Right cardiac atrium (tissue), 5 donors: ENCODE measurements at regions of chr20 and their contacts with region 1.

Region 1: GRCh38 chr20:20772602-20773001 is 60.2 kb upstream of the RALGAPA2 start:
- DNase-seq: no peak
- ATAC-seq: no peak
- H3K4me3 ChIP-seq: no peak overlapping the region
- H3K27ac ChIP-seq: no peak overlapping the region
- H3K4me1 ChIP-seq: no peaks in the 10 kb centered on the region
- H3K27me3 ChIP-seq: no peaks in the 10 kb centered on the region

Region 2: DNA sequence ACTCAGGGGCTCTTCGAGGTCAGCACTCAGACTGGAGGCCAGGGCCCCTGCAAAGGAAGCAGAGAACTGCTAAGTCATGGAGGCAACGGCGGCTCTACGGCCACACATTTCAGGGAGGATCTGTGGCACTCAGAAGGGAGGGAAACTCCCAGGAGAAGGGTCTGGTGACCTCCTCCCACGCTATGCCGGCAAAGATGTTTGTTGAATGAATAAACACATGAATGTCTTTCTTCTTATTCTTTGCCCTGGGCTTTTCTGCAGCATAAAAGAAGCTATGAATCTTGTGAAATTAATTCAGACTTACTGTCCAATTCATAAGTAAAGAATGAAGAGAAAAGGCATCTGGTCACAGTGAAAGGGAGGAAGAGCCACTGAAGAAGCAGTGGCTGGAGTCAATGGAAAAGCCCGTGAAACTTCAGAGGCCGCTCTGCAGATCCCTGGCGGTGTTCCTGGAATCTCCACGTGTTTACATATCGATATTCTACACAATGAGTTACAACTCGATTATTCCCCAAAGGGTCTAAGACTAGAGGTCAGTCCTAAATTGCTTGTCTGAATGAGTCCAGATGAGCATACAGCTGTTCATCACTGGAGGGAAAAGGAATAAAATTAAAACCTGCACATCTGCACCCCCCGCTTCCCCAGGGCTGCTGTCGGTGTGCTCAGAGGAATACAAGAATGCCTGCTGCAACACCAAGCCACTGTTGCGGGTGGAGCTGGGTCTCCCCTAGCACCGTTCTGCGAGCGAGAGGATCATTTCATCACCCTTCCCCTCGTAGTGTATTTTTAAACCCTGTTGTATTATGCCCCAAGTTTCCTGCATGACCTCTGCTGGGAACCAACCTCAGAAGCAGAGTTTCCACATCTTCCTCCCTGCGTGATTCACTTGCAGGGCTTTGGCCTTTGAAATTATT is 379.1 kb before region 1 on chr20:
- intact Hi-C with region 1: no loop called
- DNase-seq: no peak
- ATAC-seq: peak in 1 of 2 donors; percentile 13
- H3K4me3 ChIP-seq: no peak overlapping the region
- H3K27ac ChIP-seq: no peak overlapping the region
- H3K4me1 ChIP-seq: no peaks in the 10 kb centered on the region
- H3K27me3 ChIP-seq: no peaks in the 10 kb centered on the region

Region 3: GRCh38 chr20:20712474-20713243 is 59.9 kb before region 1 on chr20 and contains the start of gene RALGAPA2:
- intact Hi-C with region 1: loop called in 1 of 4 experiments (anchors 10 kb)
- DNase-seq: peak; percentile 98 to 99 (median 99)
- ATAC-seq: peak; percentile 99
- H3K4me3 ChIP-seq: peak within 1 kb of the TSS; percentile 94
- H3K27ac ChIP-seq: peak within 1 kb of the TSS; percentile 92
- H3K4me1 ChIP-seq: peaks cover 9% of the 10 kb centered on the region
- H3K27me3 ChIP-seq: no peaks in the 10 kb centered on the region
- total RNA-seq, gene RALGAPA2: 24.3 to 32.1 (median 26.6) TPM

Region 4: DNA sequence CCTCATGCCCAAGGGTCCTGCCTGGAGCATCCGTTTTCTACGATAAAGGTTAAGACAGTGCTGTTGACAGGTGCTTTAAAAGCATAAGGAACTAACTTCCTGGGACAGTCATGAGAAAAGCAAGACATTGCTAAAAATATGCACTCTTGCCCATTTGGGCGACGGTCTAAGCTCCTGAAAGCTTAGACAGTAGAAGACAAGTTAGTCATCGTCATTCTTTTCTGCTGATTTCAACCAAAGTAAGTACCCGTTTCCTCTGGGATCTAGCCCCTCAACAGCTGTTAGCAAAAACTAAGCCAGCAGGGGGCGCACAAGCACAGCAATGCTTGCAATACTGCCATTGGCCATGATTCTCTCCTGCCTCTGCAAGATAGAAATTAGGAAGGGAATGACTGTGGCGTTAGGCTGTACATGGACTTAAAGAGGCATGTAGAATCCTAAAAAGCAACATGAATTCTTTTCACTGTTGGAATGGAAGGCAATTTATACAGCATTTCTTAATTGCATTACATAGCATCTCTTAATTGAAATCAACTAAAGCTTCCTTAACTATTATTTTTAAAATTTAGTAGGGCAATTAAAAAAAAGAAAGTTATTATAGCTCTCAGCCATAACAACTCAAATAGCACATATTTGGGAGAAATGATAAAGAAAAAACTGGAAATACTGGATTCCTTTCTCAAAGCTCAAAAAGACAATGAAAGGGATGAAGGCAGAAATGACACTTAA is 87.6 kb after region 1 on chr20:
- intact Hi-C with region 1: no loop called
- DNase-seq: peak; percentile 87 to 95 (median 91)
- ATAC-seq: peak; percentile 71 to 86
- H3K4me3 ChIP-seq: no peak overlapping the region
- H3K27ac ChIP-seq: no peak overlapping the region
- H3K4me1 ChIP-seq: no peaks in the 10 kb centered on the region
- H3K27me3 ChIP-seq: no peaks in the 10 kb centered on the region